ENCODE measurements at regions of chr12 and their contacts with region 1.

Region 1: GRCh38 chr12:121793838-121794533 is 498 bp upstream of the RHOF start:
- DNase-seq: peak; percentile 96
- ATAC-seq: peak; percentile 55
- H3K4me3 Mint-ChIP-seq: peak overlapping the region; percentile 85
- H3K27ac Mint-ChIP-seq: peak overlapping the region; percentile 88
- H3K4me1 Mint-ChIP-seq: peaks cover 65% of the 10 kb centered on the region
- H3K27me3 Mint-ChIP-seq: no peaks in the 10 kb centered on the region
- CTCF ChIP-seq: peak; percentile 25

Region 2: DNA sequence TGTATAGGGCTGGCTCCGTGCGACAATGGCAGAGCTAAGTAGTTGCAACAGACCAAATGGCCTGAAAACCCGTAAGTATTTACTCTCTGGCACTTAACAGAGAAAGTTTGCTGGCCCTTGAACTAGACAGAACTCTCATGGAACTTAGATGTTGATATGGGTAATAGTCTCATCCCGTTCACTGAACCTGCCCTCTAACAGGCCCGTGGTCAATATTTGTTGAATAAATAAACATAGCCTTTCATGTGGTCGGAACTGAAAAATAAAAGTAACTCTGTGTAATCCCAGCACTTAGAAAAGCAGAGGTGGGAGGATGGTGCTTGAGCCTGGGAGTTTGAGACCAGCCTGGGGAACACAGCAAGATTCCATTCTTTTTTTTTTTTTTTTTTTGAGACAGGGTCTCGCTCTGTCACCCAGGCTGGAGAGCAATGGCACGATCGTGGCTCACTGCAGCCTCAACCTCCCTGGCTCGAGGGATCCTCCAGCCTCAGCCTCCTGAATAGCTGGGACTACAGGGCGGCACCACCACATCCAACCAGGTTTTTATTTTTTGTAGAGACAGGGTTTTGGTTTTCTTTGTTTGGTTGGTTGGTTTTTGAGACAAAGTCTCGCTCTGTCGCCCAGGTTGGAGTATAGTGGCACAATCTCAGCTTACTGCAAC is 242.9 kb before region 1 on chr12:
- CTCF ChIA-PET with region 1: interaction called, 16 read pairs
- POLR2A ChIA-PET with region 1: no interaction called
- intact Hi-C with region 1: no loop called
- DNase-seq: no peak
- ATAC-seq: no peak
- H3K4me3 Mint-ChIP-seq: no peak overlapping the region
- H3K27ac Mint-ChIP-seq: no peak overlapping the region
- H3K4me1 Mint-ChIP-seq: peaks cover 24% of the 10 kb centered on the region
- H3K27me3 Mint-ChIP-seq: no peaks in the 10 kb centered on the region
- CTCF ChIP-seq: no peak

Region 3: GRCh38 chr12:121688966-121689365 is 105.0 kb before region 1 on chr12:
- CTCF ChIA-PET with region 1: interaction called, 49 read pairs
- POLR2A ChIA-PET with region 1: interaction called, 21 read pairs
- intact Hi-C with region 1: loop called (anchors 1 kb)
- DNase-seq: no peak
- ATAC-seq: no peak
- H3K4me3 Mint-ChIP-seq: no peak overlapping the region
- H3K27ac Mint-ChIP-seq: no peak overlapping the region
- H3K4me1 Mint-ChIP-seq: peaks cover 7% of the 10 kb centered on the region
- H3K27me3 Mint-ChIP-seq: no peaks in the 10 kb centered on the region
- CTCF ChIP-seq: no peak

Region 4: DNA sequence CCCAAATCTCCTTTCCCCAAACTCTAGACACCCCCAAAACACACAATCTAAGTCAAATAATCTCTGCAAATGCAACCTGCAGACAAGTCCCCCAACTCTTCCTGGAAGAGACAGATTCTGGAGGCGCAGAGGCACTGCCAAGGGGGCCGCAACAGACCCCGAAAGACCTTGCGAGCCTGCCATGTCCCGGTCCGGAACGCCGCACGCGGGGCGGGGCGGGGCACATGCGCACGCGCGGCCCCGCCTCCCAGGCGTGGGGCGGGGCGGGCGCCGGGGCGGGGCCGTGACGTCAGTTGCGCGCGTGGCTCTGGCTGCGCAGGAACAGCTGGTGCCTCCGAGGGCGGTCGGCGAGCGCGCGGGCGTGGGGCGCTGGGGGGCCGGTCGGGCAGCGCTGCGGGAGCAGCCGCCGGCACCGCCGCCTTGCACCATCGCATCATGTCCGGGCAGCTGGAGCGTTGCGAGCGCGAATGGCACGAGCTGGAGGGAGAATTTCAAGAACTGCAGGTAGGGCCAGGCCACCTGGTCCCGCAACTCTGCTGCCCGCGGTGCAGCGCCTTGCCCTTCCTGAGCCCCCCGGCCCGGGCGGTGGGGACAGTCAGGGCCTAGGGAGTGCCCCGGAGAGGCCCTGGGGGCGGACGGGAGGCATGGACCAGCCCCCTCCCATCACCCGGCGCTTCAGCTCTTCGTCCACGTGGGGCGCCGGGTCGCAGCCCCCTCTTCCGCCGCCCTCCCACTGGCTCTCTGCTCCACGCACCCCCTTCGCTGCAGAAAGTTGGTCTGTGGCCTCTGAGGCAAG is 81.3 kb before region 1 on chr12 and contains the start of gene TMEM120B:
- CTCF ChIA-PET with region 1: interaction called, 21 read pairs
- POLR2A ChIA-PET with region 1: interaction called, 12 read pairs
- intact Hi-C with region 1: loop called (anchors 1 kb)
- DNase-seq: peak; percentile 86
- ATAC-seq: peak; percentile 94
- H3K4me3 Mint-ChIP-seq: peak within 1 kb of the TSS; percentile 97
- H3K27ac Mint-ChIP-seq: peak within 1 kb of the TSS; percentile 90
- H3K4me1 Mint-ChIP-seq: peaks cover 32% of the 10 kb centered on the region
- H3K27me3 Mint-ChIP-seq: no peaks in the 10 kb centered on the region
- CTCF ChIP-seq: no peak
- total RNA-seq, gene TMEM120B: 7.3 and 8.3 TPM in 2 replicates

Region 5: DNA sequence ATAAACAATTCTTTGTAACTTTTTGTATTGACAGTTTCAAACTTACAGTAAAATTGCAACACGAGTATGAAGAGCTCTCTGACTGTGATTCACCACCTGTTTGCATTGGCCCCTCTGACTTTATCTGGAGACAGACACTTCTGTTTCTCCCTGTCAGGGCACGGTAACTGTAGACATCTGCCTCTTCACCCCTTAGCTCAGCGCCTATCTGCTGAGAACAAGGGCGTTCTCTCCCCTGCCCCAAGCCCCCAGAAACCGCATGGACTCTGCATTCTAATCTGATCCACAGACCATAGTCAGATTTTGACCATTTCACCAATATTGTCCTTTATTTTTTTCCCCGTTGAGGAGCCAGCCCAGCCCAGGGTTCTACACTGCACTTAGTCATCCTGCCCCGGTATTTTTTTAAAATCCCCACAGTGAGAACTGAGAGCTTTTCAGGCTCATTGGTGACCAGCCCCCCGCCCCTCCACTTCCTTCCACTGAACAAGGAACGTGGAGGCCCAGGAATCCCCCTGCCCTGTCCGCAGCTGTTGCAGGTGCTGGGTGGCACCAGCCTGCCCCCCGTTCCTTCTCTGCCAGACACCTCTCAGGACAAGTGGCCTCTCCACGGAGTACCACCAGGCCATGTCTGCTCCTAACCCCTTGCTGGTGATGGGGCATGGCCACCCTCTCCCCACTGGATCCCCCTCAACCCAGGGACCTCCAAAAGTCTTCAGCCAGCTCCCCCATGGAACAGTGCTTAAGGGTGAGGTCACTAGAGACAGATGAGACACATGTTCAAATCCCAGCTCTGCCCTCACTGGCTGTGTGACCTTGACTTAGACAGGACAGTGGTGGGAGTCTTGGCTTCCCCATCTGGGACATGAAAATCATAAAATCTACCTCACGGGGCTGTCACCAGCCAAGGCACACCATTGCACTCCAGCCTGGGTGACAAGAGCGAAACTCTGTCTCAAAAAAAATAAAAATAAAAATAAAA is 11.7 kb before region 1 on chr12:
- CTCF ChIA-PET with region 1: interaction called, 387 read pairs
- POLR2A ChIA-PET with region 1: interaction called, 1,155 read pairs
- intact Hi-C with region 1: loop called (anchors 1 kb)
- DNase-seq: peak; percentile 61
- ATAC-seq: peak; percentile 76
- H3K4me3 Mint-ChIP-seq: peak overlapping the region; percentile 84
- H3K27ac Mint-ChIP-seq: peak overlapping the region; percentile 98
- H3K4me1 Mint-ChIP-seq: peaks cover 74% of the 10 kb centered on the region
- H3K27me3 Mint-ChIP-seq: no peaks in the 10 kb centered on the region
- CTCF ChIP-seq: no peak

Region 6: GRCh38 chr12:121839106-121839992 is 45.4 kb after region 1 on chr12:
- CTCF ChIA-PET with region 1: interaction called, 14 read pairs
- POLR2A ChIA-PET with region 1: interaction called, 3 read pairs
- intact Hi-C with region 1: loop called (anchors 1 kb)
- DNase-seq: peak; percentile 99
- ATAC-seq: peak; percentile 99
- H3K4me3 Mint-ChIP-seq: peak overlapping the region; percentile 97
- H3K27ac Mint-ChIP-seq: peak overlapping the region; percentile 88
- H3K4me1 Mint-ChIP-seq: peaks cover 15% of the 10 kb centered on the region
- H3K27me3 Mint-ChIP-seq: no peaks in the 10 kb centered on the region
- CTCF ChIP-seq: no peak

Region 7: GRCh38 chr12:121894633-121895032 is 100.6 kb after region 1 on chr12:
- CTCF ChIA-PET with region 1: interaction called, 47 read pairs
- POLR2A ChIA-PET with region 1: interaction called, 25 read pairs
- intact Hi-C with region 1: no loop called
- DNase-seq: no peak
- ATAC-seq: no peak
- H3K4me3 Mint-ChIP-seq: no peak overlapping the region
- H3K27ac Mint-ChIP-seq: no peak overlapping the region
- H3K4me1 Mint-ChIP-seq: peaks cover 14% of the 10 kb centered on the region
- H3K27me3 Mint-ChIP-seq: no peaks in the 10 kb centered on the region
- CTCF ChIP-seq: no peak